ENCODE measurements at regions of chr6 and their contacts with region 1.

Region 1: DNA sequence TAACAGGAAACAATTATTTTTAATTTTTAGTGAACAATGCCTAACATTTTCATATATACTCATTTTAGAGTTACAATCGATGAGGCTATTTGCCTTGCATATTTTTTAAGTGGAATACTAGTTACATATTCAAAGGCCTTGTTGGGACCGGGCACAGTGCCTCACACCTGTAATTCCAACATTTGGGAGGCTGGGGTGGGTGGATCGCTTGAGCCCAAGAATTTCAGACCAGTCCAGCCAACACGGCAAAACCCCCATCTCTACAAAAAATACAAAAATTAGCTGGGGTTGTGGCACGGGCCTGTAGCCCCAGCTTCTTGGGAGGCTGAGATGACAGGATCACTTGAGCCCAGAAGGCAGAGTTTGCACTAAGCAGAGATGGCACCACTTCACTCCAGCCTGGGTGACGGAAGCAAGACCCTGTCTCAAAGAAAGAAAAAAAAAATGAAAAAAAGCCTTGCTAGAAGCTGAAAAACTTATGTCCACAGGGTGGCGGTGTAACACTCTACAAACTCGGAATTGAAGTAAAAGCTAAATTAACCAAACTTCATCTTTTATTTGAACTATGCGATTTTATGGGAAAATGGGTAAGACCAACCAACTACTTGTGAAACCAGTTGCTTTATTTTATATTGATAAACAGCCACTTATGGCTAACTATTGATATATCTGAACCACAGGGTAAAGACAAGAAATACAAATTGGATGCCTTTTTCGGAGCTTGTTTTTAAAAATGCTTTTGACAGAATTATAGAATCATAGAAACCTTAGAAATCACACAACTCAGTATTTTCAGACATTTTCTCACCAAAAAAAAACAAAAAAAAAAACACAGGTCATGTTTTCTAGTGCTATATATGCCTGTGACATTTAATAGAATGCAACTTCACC is 24.1 kb upstream of the ROS1 start:
- DNase-seq: peak; percentile 25
- CTCF ChIP-seq: peak; percentile 68

Region 2: GRCh38 chr6:117215353-117216090 is 234.3 kb before region 1 on chr6:
- in situ Hi-C with region 1: no loop called
- DNase-seq: no peak
- CTCF ChIP-seq: no peak

Region 3: DNA sequence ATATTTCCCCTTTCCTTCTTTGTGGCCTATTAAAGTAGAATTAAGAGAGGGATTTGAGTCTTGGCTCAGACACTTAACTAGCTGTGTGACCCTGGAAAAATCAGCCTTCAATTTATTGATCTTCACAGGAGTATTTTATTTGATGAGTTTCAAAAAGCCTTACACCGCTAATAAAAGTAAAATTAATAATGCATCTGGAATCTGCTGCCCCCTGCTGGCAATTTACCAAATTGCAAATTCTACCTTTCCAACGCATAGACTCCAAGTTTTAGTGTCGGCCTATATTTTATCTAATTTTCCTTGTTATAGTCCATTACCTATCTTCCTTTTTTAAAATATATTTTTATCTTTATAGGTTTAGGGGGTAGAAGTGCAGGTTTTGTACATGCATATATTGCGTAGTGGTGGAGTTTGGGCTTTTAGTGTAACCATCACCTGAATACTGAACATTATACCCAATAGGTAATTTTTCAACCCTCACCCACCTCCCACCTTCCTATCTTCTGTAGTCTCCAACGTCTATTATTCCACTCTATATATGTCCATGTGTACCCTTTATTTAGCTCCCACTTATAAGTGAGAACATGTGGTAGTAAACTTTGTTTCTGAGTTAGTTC is 106.2 kb after region 1 on chr6:
- in situ Hi-C with region 1: loop called (anchors 10 kb)
- DNase-seq: no peak
- CTCF ChIP-seq: peak; percentile 65

Region 4: GRCh38 chr6:117829594-117830319 is 380.0 kb after region 1 on chr6:
- in situ Hi-C with region 1: loop called (anchors 25 kb)
- DNase-seq: peak; percentile 34
- CTCF ChIP-seq: peak; percentile 55

Measured in GM13977 (cell line).